ENCODE measurements at regions of chr11 and their contacts with region 1.

Region 1: DNA sequence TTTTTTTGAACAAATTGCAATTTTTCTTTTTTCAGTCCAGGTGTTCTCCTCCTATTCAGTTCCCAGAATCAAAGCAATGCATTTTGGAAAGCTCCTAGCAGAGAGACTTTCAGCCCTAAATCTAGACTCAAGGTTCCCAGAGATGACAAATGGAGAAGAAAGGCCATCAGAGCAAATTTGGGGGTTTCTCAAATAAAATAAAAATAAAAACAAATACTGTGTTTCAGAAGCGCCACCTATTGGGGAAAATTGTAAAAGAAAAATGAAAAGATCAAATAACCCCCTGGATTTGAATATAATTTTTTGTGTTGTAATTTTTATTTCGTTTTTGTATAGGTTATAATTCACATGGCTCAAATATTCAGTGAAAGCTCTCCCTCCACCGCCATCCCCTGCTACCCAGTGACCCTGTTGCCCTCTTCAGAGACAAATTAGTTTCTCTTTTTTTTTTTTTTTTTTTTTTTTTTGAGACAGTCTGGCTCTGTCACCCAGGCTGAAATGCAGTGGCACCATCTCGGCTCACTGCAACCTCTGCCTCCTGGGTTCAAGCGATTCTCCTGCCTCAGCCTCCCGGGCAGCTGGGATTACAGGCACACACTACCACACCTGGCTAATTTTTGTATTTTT is 6.2 kb upstream of the UBE4A start:
- DNase-seq: no peak
- H3K4me3 ChIP-seq: no peak overlapping the region
- CTCF ChIP-seq: no peak

Region 2: GRCh38 chr11:118295834-118296454 is 57.3 kb before region 1 on chr11:
- CTCF ChIA-PET with region 1: interaction called, 11 read pairs
- POLR2A ChIA-PET with region 1: no interaction called
- DNase-seq: no peak
- H3K4me3 ChIP-seq: no peak overlapping the region
- CTCF ChIP-seq: peak; percentile 34

Region 3: GRCh38 chr11:118364956-118365615 is 11.9 kb after region 1 on chr11:
- CTCF ChIA-PET with region 1: interaction called, 10 read pairs
- POLR2A ChIA-PET with region 1: no interaction called
- DNase-seq: no peak
- H3K4me3 ChIP-seq: no peak overlapping the region
- CTCF ChIP-seq: no peak

Measured in AG04449 (cell line).